GM12878 (cell line): ENCODE measurements at regions of chr18 and their contacts with region 1.

Region 1: DNA sequence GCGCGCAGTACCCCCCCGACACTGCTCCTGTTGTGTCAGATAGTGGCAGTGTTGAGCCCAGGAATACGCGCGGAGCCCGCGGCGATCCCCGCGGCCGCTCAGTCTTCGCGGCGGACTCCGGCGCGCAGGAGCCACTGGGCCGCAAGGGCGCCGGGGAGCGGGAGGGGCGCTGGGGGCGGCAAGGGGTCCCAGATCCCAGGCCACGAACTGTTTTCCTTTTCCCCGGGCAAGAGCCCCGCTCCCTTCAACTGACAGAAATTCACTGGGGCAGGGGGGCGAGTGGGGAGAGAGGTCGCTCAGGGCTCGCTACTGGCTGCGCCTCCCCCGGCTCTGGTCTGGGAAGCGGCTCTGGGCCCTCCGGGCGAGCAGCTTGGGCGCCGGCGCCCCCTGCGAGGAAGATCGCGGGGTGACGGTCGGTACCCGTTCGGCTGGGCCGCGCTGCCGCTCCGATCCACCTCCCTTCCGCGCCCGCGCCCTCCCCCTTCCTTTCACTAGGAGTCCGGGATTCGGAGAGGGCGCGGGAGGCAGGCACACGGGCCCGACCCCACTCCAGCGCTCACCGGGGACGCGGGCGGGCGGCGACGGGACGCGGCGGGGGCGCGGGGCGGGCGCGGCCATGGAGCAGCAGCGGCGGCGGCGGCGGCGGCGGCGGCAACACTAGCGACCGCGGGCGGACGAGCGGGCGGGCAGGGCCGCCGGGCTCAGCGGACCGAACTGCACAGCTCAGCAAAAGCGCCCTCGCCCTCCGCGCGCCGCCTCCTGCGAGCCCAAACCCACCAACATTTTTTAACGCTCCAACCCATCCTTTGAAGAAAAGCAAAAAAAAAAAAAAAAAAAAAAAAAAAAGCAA is 1.4 kb upstream of the SETBP1 start:
- DNase-seq: no peak
- ATAC-seq: peak; percentile 87
- H3K4me3 ChIP-seq: peak overlapping the region; percentile 78
- H3K27ac ChIP-seq: peak overlapping the region; percentile 82
- H3K4me1 ChIP-seq: peaks cover 14% of the 10 kb centered on the region
- H3K27me3 ChIP-seq: peaks cover 0 to 3% of the 10 kb centered on the region in 2 experiments; a peak in 1 of 4 replicates
- CTCF ChIP-seq: peak; percentile 68 to 92 (median 76)
- EP300 ChIP-seq: no peak
- POLR2A ChIP-seq: peak; percentile 56
- RAD21 ChIP-seq: peak; percentile 90

Region 2: DNA sequence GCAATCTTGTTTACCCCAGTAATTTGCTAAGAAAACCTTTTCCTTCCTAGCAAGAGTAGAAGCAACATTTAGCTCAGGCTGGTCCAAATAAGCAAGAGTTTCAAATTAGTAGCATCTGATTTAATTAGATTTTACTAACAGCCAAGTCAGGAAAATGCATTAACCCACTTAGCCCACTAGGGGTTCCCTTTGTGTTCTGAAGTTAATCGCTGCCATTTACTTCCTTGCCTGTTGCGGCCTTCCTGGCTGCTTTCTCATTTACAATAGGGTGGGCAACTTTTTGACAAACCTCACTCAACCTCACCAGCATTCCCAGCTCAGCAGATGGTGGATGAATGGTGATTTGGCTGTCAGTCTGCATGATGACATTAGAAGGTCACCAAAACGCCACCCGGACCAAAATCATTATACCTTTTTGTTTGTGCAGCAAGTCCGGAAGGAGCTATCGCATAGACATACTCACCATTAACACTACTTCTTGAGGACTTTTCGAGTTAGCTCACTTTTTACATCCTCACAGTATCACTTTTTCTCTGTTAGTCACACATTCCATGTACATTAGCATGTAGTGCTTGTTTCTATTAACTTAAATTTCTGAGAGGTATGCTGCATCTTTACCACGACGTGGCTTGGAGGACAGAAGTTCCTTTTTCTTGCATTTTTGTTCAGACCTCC is 100.1 kb before region 1 on chr18:
- CTCF ChIA-PET with region 1: interaction called, 3 read pairs
- POLR2A ChIA-PET with region 1: interaction called, 4 read pairs
- RAD21 ChIA-PET with region 1: interaction called, 3 read pairs
- SMC1A ChIA-PET with region 1: interaction called, 4 read pairs
- in situ Hi-C with region 1: no loop called
- intact Hi-C with region 1: loop called (anchors 5 kb)
- DNase-seq: no peak
- ATAC-seq: peak; percentile 65; the same call in 2 of the 3 replicates
- H3K4me3 ChIP-seq: no peak overlapping the region
- H3K27ac ChIP-seq: no peak overlapping the region
- H3K4me1 ChIP-seq: no peaks in the 10 kb centered on the region
- H3K27me3 ChIP-seq: 0 out of 4 replicates have a peak, but pooled peaks cover 0 to 1% of the 10 kb centered on the region in 2 experiments
- CTCF ChIP-seq: peak; percentile 63 to 78 (median 67); a peak in 5 of 6 replicates
- EP300 ChIP-seq: no peak
- POLR2A ChIP-seq: no peak
- RAD21 ChIP-seq: peak; percentile 68

Region 3: DNA sequence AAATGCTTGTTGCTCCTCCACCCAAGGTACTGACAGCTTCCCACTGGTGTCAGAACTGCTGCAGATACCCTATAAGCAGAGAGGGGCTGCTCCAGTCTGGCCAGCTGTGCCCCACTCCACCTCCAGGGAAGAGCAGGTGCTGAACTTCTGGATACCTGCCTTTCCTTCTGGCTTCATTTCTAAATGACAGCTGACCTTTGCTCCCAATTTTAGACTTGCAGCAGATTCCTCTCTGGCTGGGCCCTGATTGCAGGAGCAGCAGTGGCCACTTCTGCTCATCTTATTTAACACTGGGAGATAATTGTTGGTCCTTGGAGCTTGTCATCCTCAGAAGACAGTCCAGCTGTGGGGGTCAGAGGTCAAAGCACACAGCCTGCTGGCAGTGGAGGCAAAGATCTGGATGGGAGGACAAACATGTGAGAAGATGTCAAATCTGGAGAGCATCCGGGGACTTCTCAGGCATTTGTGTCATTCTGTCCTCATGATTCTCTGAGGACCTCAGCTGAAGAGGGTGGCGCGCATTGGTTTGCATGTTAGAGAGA is 40.3 kb after region 1 on chr18:
- CTCF ChIA-PET with region 1: interaction called, 8 read pairs
- POLR2A ChIA-PET with region 1: interaction called, 8 read pairs
- RAD21 ChIA-PET with region 1: interaction called, 63 read pairs
- SMC1A ChIA-PET with region 1: interaction called, 31 read pairs
- in situ Hi-C with region 1: no loop called
- intact Hi-C with region 1: loop called (anchors 2 kb)
- DNase-seq: no peak
- ATAC-seq: no peak
- H3K4me3 ChIP-seq: no peak overlapping the region
- H3K27ac ChIP-seq: no peak overlapping the region
- H3K4me1 ChIP-seq: peaks cover 42% of the 10 kb centered on the region
- H3K27me3 ChIP-seq: no peaks in the 10 kb centered on the region
- CTCF ChIP-seq: no peak
- EP300 ChIP-seq: no peak
- POLR2A ChIP-seq: no peak
- RAD21 ChIP-seq: no peak

Region 4: GRCh38 chr18:44758861-44759631 is 79.8 kb after region 1 on chr18:
- CTCF ChIA-PET with region 1: interaction called, 8 read pairs
- POLR2A ChIA-PET with region 1: interaction called, 12 read pairs
- RAD21 ChIA-PET with region 1: interaction called, 43 read pairs
- SMC1A ChIA-PET with region 1: interaction called, 26 read pairs
- in situ Hi-C with region 1: no loop called
- intact Hi-C with region 1: loop called (anchors 1 kb)
- DNase-seq: peak; percentile 98
- ATAC-seq: peak; percentile 93
- H3K4me3 ChIP-seq: peak overlapping the region; percentile 28
- H3K27ac ChIP-seq: peak overlapping the region; percentile 98
- H3K4me1 ChIP-seq: peaks cover 35% of the 10 kb centered on the region
- H3K27me3 ChIP-seq: no peaks in the 10 kb centered on the region
- CTCF ChIP-seq: no peak
- EP300 ChIP-seq: peak; percentile 99 to 100
- POLR2A ChIP-seq: no peak
- RAD21 ChIP-seq: peak; percentile 22; the same call in 1 of the 2 replicates

Region 5: GRCh38 chr18:44895176-44895798 is 216.0 kb after region 1 on chr18:
- CTCF ChIA-PET with region 1: no interaction called
- POLR2A ChIA-PET with region 1: interaction called, 8 read pairs
- RAD21 ChIA-PET with region 1: interaction called, 5 read pairs
- SMC1A ChIA-PET with region 1: interaction called, 5 read pairs
- in situ Hi-C with region 1: no loop called
- intact Hi-C with region 1: loop called (anchors 1 kb)
- DNase-seq: peak; percentile 53
- ATAC-seq: peak; percentile 86
- H3K4me3 ChIP-seq: no peak overlapping the region
- H3K27ac ChIP-seq: no peak overlapping the region
- H3K4me1 ChIP-seq: no peaks in the 10 kb centered on the region
- H3K27me3 ChIP-seq: no peaks in the 10 kb centered on the region
- CTCF ChIP-seq: peak; percentile 44 to 56 (median 48); a peak in 4 of 6 replicates
- EP300 ChIP-seq: no peak
- POLR2A ChIP-seq: no peak
- RAD21 ChIP-seq: peak; percentile 61

Region 6: DNA sequence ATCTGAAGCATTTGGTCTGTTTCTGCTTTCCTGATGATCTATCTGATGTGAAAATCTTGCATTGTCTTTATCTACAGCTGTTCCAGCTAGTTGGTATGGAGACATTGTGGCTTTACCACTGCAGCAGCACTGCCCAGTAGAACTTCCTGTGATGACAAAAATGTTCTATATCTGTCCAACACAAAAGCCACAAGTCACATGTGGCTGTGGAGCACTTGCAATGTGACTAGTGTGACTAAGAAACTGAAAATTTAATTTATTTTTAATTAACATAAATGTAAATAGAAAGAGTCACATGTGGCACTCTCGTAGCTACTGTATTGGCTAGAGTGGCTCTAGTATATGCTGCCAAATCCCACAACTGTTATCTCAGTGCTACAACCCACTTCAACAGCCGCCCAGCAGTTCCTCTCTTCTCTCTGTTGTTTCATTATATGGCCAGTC is 427.1 kb after region 1 on chr18:
- CTCF ChIA-PET with region 1: interaction called, 3 read pairs
- POLR2A ChIA-PET with region 1: no interaction called
- RAD21 ChIA-PET with region 1: interaction called, 16 read pairs
- SMC1A ChIA-PET with region 1: no interaction called
- in situ Hi-C with region 1: no loop called
- intact Hi-C with region 1: loop called (anchors 2 kb)
- DNase-seq: peak; percentile 87
- ATAC-seq: peak; percentile 83
- H3K4me3 ChIP-seq: no peak overlapping the region
- H3K27ac ChIP-seq: peak overlapping the region; percentile 92
- H3K4me1 ChIP-seq: peaks cover 47% of the 10 kb centered on the region
- H3K27me3 ChIP-seq: no peaks in the 10 kb centered on the region
- CTCF ChIP-seq: no peak
- EP300 ChIP-seq: peak; percentile 97 to 99
- POLR2A ChIP-seq: no peak
- RAD21 ChIP-seq: no peak

Region 7: DNA sequence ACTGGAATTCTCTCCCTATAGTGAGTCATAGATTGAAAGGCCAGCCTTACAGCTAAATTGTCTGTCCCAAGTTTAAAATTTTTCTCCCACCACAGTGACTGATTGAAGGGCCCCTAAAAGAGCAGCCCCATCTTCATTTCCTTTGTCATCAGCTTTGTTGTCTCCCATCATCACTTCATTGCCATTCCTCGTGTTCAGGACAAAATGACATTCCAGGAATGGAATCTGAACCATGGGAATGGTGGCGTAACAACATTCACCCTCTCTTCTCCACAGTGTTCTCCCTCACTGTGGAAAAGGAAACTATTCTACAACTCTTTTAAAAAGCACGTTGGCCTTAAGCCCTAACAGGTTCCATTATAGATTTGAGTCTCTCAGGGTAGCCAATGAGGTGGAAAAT is 1340.7 kb after region 1 on chr18:
- CTCF ChIA-PET with region 1: no interaction called
- POLR2A ChIA-PET with region 1: no interaction called
- RAD21 ChIA-PET with region 1: no interaction called
- SMC1A ChIA-PET with region 1: no interaction called
- in situ Hi-C with region 1: no loop called
- intact Hi-C with region 1: no loop called
- DNase-seq: no peak
- ATAC-seq: no peak
- H3K4me3 ChIP-seq: no peak overlapping the region
- H3K27ac ChIP-seq: no peak overlapping the region
- H3K4me1 ChIP-seq: no peaks in the 10 kb centered on the region
- H3K27me3 ChIP-seq: no peaks in the 10 kb centered on the region; a peak in 1 of 4 replicates
- CTCF ChIP-seq: no peak
- EP300 ChIP-seq: no peak
- POLR2A ChIP-seq: no peak
- RAD21 ChIP-seq: no peak